ENCODE measurements at regions of chr15 and their contacts with region 1.

Region 1: DNA sequence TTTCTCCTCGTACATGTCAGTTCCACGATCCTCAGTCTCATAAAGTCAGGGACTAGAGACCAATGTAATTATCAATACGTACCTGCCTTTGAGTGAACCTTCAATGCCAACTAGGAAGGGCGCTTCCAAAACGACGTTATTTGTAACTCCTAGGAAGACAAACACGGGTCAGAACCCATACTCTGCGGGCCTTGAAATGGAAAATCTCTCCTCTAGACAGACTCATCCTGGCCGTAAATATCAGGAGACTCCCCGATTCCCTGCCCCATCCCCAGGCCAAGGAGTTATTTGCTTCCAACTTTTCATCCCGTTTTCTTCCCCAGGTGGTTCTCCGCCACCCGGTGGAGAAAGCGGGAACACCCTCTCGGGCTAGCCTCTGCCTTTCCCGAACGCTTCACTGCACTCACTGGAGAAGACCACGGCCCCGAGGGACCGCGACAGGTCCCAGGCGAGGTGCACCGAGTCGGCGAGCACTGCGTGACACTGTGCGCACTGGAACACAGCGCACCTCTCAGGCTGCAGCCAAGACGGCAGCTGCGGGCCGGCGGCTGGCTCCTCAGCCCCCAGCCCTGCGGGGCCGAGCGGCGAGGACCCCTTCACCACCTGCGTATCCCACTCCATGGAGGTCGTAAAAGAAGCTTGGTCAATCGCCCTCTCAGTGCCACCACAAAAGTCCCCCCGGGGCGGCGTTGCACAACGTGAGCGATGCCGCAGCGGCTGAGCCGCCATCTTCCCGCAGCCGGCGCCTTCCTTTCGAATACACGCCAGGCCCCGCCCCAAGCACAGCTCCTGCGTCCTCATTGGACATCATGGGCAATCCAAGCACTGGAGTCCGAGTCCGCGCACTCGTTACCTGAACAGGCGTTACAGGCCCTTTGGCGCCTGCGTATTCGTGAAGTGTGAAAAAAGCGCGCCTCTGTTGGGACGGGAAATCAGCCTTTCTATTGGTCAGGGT is at the start of gene OIP5:
- DNase-seq: peak; percentile 95 to 99 (median 98)
- ATAC-seq: peak; percentile 99 to 100 (median 100)
- H3K4me3 ChIP-seq: peak within 1 kb of the TSS; percentile 67 to 98 (median 84)
- H3K27ac ChIP-seq: peak within 1 kb of the TSS in 9 of 12 donors; percentile 14 to 76 (median 59)
- H3K4me1 ChIP-seq: peaks cover 0 to 27% (median 9%) of the 10 kb centered on the region in 12 donors
- H3K27me3 ChIP-seq: no peaks in the 10 kb centered on the region
- CTCF ChIP-seq: peak; percentile 36 to 77 (median 62)
- POLR2A ChIP-seq: no peak
- total RNA-seq, gene OIP5: 0.22 to 1.3 (median 0.72) TPM in 7 of 9 donors, not detected in the others

Region 2: GRCh38 chr15:41169781-41170180 is 162.3 kb before region 1 on chr15:
- intact Hi-C with region 1: no loop called
- DNase-seq: no peak
- ATAC-seq: no peak
- H3K4me3 ChIP-seq: no peak overlapping the region
- H3K27ac ChIP-seq: peak overlapping the region in 1 of 12 donors; percentile 59
- H3K4me1 ChIP-seq: peaks cover 0 to 11% (median 0%) of the 10 kb centered on the region in 12 donors
- H3K27me3 ChIP-seq: peaks cover 0 to 4% (median 0%) of the 10 kb centered on the region in 9 donors
- CTCF ChIP-seq: no peak
- POLR2A ChIP-seq: no peak

Region 3: DNA sequence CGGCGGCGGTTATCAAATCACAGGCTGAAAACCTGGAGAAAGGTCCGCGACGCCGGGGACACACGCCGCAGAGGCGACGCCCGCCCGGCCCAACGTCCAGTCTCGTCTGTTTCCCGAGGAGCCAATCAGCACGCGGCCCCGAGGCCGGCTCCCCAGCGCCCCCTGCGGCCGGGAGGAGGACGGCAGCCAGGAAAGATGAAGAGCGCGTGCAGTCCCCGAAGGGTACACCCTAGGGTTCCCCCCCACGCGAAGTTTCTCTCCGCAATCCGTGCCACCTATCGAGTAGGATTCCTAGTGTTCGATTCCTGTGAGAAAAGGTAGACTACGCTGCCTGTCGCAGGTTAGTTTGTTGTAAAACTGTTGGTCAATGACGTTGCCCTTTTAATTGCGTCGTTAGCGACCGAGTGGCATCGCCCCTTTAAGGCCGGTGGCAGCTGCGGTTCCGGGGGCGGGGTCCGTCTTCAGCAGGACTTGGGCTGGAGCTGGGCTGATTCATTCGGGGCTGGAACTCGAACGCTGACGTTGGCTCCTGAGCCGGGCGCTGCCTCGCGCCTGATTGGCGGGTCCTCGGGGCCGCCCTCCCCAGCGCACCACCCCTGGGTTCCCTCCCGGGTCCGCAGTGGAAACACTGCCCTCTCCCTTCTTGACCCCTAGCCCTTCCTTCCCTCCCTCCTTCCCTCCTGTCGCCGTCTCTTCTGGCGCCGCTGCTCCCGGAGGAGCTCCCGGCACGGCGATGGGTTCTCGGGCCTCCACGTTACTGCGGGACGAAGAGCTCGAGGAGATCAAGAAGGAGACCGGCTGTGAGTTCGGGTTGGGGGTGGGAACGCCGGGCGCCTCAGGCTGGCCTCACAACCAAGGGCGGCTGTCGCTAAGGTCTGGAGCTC is 101.2 kb before region 1 on chr15 and contains the starts of genes CHP1 and EXD1:
- intact Hi-C with region 1: no loop called
- DNase-seq: peak; percentile 99
- ATAC-seq: peak; percentile 100
- H3K4me3 ChIP-seq: peak within 1 kb of the TSS; percentile 59 to 94 (median 81)
- H3K27ac ChIP-seq: peak within 1 kb of the TSS; percentile 83 to 95 (median 91)
- H3K4me1 ChIP-seq: peaks cover 0 to 34% (median 26%) of the 10 kb centered on the region in 12 donors
- H3K27me3 ChIP-seq: no peaks in the 10 kb centered on the region
- CTCF ChIP-seq: peak; percentile 88 to 99 (median 96)
- POLR2A ChIP-seq: peak in 1 of 2 donors; percentile 78
- total RNA-seq, gene CHP1: 102 to 232 (median 119) TPM
- total RNA-seq, gene EXD1: not detected

Region 4: GRCh38 chr15:41283653-41284426 is 48.3 kb before region 1 on chr15:
- intact Hi-C with region 1: loop called in 1 of 10 experiments (anchors 5 kb)
- DNase-seq: peak; percentile 98 to 99 (median 99)
- ATAC-seq: peak; percentile 99 to 100 (median 100)
- H3K4me3 ChIP-seq: peak overlapping the region; percentile 52 to 99 (median 87)
- H3K27ac ChIP-seq: peak overlapping the region; percentile 83 to 99 (median 94)
- H3K4me1 ChIP-seq: peaks cover 3 to 47% (median 29%) of the 10 kb centered on the region in 12 donors
- H3K27me3 ChIP-seq: no peaks in the 10 kb centered on the region
- CTCF ChIP-seq: no peak
- POLR2A ChIP-seq: peak; percentile 64 to 94

Region 5: GRCh38 chr15:41523097-41523496 is 191.0 kb after region 1 on chr15:
- intact Hi-C with region 1: no loop called
- DNase-seq: no peak
- ATAC-seq: peak in 1 of 4 donors; percentile 23
- H3K4me3 ChIP-seq: no peak overlapping the region
- H3K27ac ChIP-seq: no peak overlapping the region
- H3K4me1 ChIP-seq: no peaks in the 10 kb centered on the region
- H3K27me3 ChIP-seq: no peaks in the 10 kb centered on the region
- CTCF ChIP-seq: no peak
- POLR2A ChIP-seq: no peak